ENCODE measurements at regions of chr3 and their contacts with region 1.

Region 1: GRCh38 chr3:133895208-133896001 is at the start of gene RAB6B:
- DNase-seq: no peak
- ATAC-seq: peak; percentile 87
- H3K4me3 ChIP-seq: peak within 1 kb of the TSS; percentile 49 to 73 (median 60)
- H3K27ac ChIP-seq: no peak within 1 kb of the TSS
- H3K4me1 ChIP-seq: no peaks in the 10 kb centered on the region
- H3K27me3 ChIP-seq: peaks cover 7 to 53% of the 10 kb centered on the region in 2 experiments; a peak in 4 of 5 replicates
- CTCF ChIP-seq: no peak
- EP300 ChIP-seq: no peak
- POLR2A ChIP-seq: no peak
- RAD21 ChIP-seq: no peak
- total RNA-seq, gene RAB6B: 0.17 TPM in 1 of 2 replicates, not detected in the other

Region 2: GRCh38 chr3:133979553-133979952 is 84.1 kb after region 1 on chr3:
- CTCF ChIA-PET with region 1: no interaction called
- POLR2A ChIA-PET with region 1: no interaction called
- in situ Hi-C with region 1: no loop called
- intact Hi-C with region 1: loop called (anchors 2 kb)
- DNase-seq: no peak
- ATAC-seq: no peak
- H3K4me3 ChIP-seq: no peak overlapping the region
- H3K27ac ChIP-seq: no peak overlapping the region
- H3K4me1 ChIP-seq: no peaks in the 10 kb centered on the region
- H3K27me3 ChIP-seq: peaks cover 0 to 18% of the 10 kb centered on the region in 2 experiments; a peak in 3 of 5 replicates
- CTCF ChIP-seq: no peak
- EP300 ChIP-seq: no peak
- POLR2A ChIP-seq: no peak
- RAD21 ChIP-seq: no peak